ENCODE measurements at regions of chr5 and their contacts with region 1.

Region 1: GRCh38 chr5:131996207-131997025 is 15.0 kb downstream of the ACSL6 start:
- DNase-seq: no peak
- H3K4me3 Mint-ChIP-seq: no peak overlapping the region
- H3K27ac Mint-ChIP-seq: peak overlapping the region; percentile 59
- H3K4me1 Mint-ChIP-seq: peaks cover 29% of the 10 kb centered on the region
- H3K27me3 Mint-ChIP-seq: peaks cover 27% of the 10 kb centered on the region
- CTCF ChIP-seq: no peak

Region 2: DNA sequence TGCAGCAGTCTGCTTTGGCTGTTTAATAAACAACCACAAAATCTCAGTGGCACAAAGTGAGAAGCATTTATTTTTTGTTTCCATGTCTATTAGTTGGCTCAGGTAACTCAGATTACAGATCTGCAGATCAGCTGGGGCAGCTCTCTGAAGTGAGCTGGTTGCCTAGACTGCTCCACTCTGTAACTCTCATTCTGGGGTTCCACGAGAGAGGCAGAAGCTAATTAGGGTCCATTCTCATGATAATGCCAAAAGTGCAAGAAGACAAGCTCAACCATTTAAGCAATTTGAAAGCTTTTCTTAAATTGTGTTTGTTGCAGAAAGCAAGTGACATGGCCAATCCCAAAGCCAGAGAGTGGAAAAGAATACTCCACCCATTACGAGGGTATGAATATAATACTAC is 64.2 kb before region 1 on chr5:
- CTCF ChIA-PET with region 1: no interaction called
- intact Hi-C with region 1: no loop called
- DNase-seq: no peak
- H3K4me3 Mint-ChIP-seq: no peak overlapping the region
- H3K27ac Mint-ChIP-seq: no peak overlapping the region
- H3K4me1 Mint-ChIP-seq: no peaks in the 10 kb centered on the region
- H3K27me3 Mint-ChIP-seq: peaks cover 53% of the 10 kb centered on the region
- CTCF ChIP-seq: no peak

Region 3: GRCh38 chr5:131952301-131952857 is 44.0 kb before region 1 on chr5:
- CTCF ChIA-PET with region 1: no interaction called
- intact Hi-C with region 1: loop called (anchors 1 kb)
- DNase-seq: no peak
- H3K4me3 Mint-ChIP-seq: no peak overlapping the region
- H3K27ac Mint-ChIP-seq: no peak overlapping the region
- H3K4me1 Mint-ChIP-seq: no peaks in the 10 kb centered on the region
- H3K27me3 Mint-ChIP-seq: peaks cover 33% of the 10 kb centered on the region
- CTCF ChIP-seq: no peak

Region 4: DNA sequence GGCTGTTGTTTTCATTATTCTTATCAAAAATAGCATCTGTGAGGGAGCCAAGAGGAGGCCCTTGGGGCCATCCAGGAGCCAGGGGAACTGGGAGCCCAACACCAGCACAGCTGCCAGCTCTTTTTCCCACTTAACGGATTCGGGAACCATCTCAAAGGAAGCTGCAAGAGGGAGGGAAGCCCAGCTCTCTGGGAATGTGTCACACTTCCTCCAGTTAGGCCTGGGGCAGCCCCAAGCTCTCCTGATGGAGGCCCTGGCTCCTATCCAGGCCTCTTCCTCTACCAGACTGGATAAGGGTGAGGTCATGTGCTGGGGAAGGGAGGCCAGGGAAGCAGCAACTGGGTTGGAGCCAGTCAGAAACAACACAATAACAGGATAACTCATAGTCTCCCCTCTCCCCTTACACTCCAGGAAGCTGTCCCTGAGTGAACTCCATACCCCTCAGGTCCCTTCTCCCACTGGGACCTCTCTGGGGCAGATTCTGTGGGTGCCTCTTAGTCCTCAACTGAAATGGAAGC is 89.9 kb after region 1 on chr5:
- CTCF ChIA-PET with region 1: no interaction called
- intact Hi-C with region 1: no loop called
- DNase-seq: peak; percentile 86
- H3K4me3 Mint-ChIP-seq: no peak overlapping the region
- H3K27ac Mint-ChIP-seq: peak overlapping the region; percentile 14
- H3K4me1 Mint-ChIP-seq: peaks cover 39% of the 10 kb centered on the region
- H3K27me3 Mint-ChIP-seq: no peaks in the 10 kb centered on the region
- CTCF ChIP-seq: no peak